Endothelial cell of umbilical vein (primary cell): ENCODE measurements at regions of chr6 and their contacts with region 1.

Region 1: GRCh38 chr6:112879920-112880413 is 532.8 kb downstream of the RFPL4B start:
- DNase-seq: no peak
- H3K4me3 ChIP-seq: no peak overlapping the region
- H3K27ac ChIP-seq: no peak overlapping the region
- H3K4me1 ChIP-seq: peaks cover 23% of the 10 kb centered on the region
- H3K27me3 ChIP-seq: no peaks in the 10 kb centered on the region
- CTCF ChIP-seq: no peak
- POLR2A ChIP-seq: no peak

Region 2: DNA sequence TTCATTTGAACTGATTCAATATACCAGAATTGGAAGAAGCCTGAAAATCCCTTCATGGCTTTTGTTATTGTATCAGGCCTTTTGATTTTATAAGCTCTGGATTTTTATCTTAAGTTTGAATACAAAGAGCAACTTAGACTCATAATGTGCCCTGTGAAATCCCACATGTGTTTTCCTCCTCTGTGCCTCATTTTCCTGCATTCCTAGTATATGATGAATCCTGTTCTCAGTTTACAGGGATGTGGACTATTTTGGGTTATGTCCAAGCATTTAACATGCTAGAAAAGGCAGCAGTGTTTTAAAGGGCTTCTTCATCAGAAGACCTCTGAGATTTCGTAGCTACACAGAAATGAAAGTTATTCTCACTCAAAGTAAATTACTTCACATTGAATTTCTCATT is 77.8 kb before region 1 on chr6:
- CTCF ChIA-PET with region 1: interaction called, 11 read pairs
- POLR2A ChIA-PET with region 1: no interaction called
- dilution Hi-C with region 1: no loop called
- intact Hi-C with region 1: no loop called
- DNase-seq: peak; percentile 93
- H3K4me3 ChIP-seq: peak overlapping the region in 1 of 3 experiments; percentile 35
- H3K27ac ChIP-seq: peak overlapping the region; percentile 68
- H3K4me1 ChIP-seq: peaks cover 19% of the 10 kb centered on the region
- H3K27me3 ChIP-seq: no peaks in the 10 kb centered on the region
- CTCF ChIP-seq: no peak
- POLR2A ChIP-seq: no peak

Region 3: DNA sequence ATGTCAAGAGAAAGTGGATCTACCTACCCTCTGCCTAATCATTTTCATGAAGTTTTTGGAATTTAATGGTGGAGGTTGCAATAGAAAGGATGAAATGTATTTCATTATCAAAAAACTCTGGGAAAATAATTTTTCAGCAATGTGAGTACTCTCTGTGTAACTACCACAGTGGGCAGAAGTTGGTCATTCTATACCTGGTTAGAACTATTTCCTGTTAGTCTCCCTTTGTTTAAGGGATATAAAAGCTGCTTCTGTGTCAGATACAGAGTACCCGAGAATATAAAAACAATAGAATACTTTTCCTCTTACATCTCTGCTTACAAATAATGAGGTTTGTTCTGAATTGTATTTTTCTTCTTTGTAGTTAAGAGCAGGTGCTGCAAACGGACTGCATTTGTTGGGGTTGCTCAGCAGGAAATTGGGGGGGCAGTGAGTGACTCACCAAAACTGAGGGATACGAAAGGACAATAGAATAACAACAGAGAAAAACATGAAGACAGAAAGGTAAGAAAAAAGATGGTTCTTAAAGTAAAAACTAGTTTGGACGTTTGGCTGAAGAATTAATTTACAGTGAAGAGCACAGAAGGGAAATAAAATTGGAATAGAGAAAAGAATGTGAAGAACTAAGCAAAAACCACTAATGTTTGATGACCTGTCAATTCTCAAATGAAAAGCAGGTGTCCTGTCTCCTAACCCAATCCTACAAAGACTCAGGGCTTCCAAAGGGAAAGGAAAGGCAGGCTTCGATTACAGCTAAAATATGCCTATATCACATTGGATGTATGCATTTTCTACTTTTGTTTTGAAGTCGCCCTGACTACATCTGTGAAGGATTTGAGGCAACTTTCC is 170.3 kb after region 1 on chr6:
- CTCF ChIA-PET with region 1: no interaction called
- POLR2A ChIA-PET with region 1: no interaction called
- dilution Hi-C with region 1: no loop called
- intact Hi-C with region 1: loop called (anchors 5 kb)
- DNase-seq: peak; percentile 92
- H3K4me3 ChIP-seq: no peak overlapping the region
- H3K27ac ChIP-seq: peak overlapping the region; percentile 74
- H3K4me1 ChIP-seq: peaks cover 29% of the 10 kb centered on the region
- H3K27me3 ChIP-seq: no peaks in the 10 kb centered on the region
- CTCF ChIP-seq: no peak
- POLR2A ChIP-seq: no peak

Region 4: DNA sequence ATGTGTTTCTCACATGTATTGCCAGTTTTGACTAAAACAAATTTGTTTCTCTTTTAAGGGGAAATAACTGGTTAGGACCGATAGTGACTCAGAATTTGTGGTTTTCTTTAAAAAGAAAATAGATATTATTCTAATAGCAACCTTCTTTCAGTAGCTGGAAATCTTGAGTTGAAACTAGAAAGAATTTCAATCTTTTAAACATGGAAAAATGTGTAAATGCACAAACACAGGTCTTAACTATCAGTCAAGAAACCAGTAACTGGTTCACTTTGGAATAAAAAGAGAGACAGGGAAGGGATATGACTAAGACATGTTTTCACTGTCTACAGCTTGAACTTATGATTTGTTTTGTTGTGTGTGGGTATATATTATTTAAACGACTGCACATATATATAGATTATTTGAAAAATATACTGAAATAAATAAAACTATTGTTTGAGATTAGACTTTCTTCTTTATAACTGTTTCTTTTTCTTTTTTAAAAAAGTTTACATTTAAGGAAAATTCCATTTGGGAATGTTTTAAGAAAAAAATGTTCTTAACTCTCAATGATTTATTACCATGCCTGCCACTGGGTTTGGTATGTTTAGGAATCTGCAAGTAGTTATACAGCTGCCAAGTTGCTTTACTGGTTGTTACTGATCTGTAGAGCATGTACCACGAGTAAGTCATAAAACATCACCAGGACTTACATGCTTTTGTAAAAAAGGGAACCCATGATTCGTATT is 223.8 kb after region 1 on chr6:
- CTCF ChIA-PET with region 1: interaction called, 4 read pairs
- POLR2A ChIA-PET with region 1: no interaction called
- dilution Hi-C with region 1: no loop called
- intact Hi-C with region 1: loop called (anchors 1 kb)
- DNase-seq: peak; percentile 88
- H3K4me3 ChIP-seq: peak overlapping the region in 1 of 3 experiments; percentile 12
- H3K27ac ChIP-seq: peak overlapping the region; percentile 98
- H3K4me1 ChIP-seq: peaks cover 27% of the 10 kb centered on the region
- H3K27me3 ChIP-seq: no peaks in the 10 kb centered on the region
- CTCF ChIP-seq: no peak
- POLR2A ChIP-seq: no peak

Region 5: GRCh38 chr6:113879186-113880096 is 999.5 kb after region 1 on chr6:
- CTCF ChIA-PET with region 1: interaction called, 12 read pairs
- POLR2A ChIA-PET with region 1: no interaction called
- dilution Hi-C with region 1: no loop called
- intact Hi-C with region 1: loop called (anchors 2 kb)
- DNase-seq: peak; percentile 91
- H3K4me3 ChIP-seq: peak overlapping the region in 1 of 3 experiments; percentile 69
- H3K27ac ChIP-seq: peak overlapping the region; percentile 63
- H3K4me1 ChIP-seq: peaks cover 9% of the 10 kb centered on the region
- H3K27me3 ChIP-seq: no peaks in the 10 kb centered on the region
- CTCF ChIP-seq: peak; percentile 68
- POLR2A ChIP-seq: no peak